Activated T-helper 2 cell treated with anti-CD3 and anti-CD28 coated beads, Interferon-gamma antibody, Interleukin-2, Interleukin-4, amounts not matched to agents 10 μg/mL and 5 μg/mL and 100 μg/mL, durations not matched to agents 14 hours and 24 hours and 36 hours (primary cell): ENCODE measurements at regions of chr11 and their contacts with region 1.

Region 1: GRCh38 chr11:62855571-62856332 is 16.4 kb upstream of the WDR74 start:
- DNase-seq: peak; percentile 98
- H3K4me3 Mint-ChIP-seq: peak overlapping the region; percentile 96
- H3K27ac Mint-ChIP-seq: peak overlapping the region; percentile 96
- H3K4me1 Mint-ChIP-seq: peaks cover 45% of the 10 kb centered on the region
- H3K27me3 Mint-ChIP-seq: no peaks in the 10 kb centered on the region

Region 2: DNA sequence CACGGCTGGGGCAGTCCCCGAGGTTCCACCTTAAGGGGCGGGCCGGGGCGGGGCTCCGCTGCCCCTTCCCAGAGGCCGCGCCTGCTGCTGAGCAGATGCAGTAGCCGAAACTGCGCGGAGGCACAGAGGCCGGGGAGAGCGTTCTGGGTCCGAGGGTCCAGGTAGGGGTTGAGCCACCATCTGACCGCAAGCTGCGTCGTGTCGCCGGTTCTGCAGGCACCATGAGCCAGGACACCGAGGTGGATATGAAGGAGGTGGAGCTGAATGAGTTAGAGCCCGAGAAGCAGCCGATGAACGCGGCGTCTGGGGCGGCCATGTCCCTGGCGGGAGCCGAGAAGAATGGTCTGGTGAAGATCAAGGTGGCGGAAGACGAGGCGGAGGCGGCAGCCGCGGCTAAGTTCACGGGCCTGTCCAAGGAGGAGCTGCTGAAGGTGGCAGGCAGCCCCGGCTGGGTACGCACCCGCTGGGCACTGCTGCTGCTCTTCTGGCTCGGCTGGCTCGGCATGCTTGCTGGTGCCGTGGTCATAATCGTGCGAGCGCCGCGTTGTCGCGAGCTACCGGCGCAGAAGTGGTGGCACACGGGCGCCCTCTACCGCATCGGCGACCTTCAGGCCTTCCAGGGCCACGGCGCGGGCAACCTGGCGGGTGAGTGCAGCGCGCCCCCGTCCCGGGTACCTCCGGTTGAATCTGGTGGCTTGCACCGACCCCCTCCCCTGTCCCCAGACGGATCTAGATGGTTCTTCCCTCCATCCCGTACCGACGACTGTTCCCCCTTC is 25.2 kb after region 1 on chr11 and contains the start of gene SLC3A2:
- intact Hi-C with region 1: loop called (anchors 1 kb)
- DNase-seq: peak; percentile 85
- H3K4me3 Mint-ChIP-seq: peak within 1 kb of the TSS; percentile 100
- H3K27ac Mint-ChIP-seq: peak within 1 kb of the TSS; percentile 100
- H3K4me1 Mint-ChIP-seq: peaks cover 55% of the 10 kb centered on the region
- H3K27me3 Mint-ChIP-seq: no peaks in the 10 kb centered on the region
- total RNA-seq, gene SLC3A2: 245 and 286 TPM in 2 replicates

Region 3: GRCh38 chr11:62958547-62959421 is 103.0 kb after region 1 on chr11:
- intact Hi-C with region 1: no loop called
- DNase-seq: no peak
- H3K4me3 Mint-ChIP-seq: no peak overlapping the region
- H3K27ac Mint-ChIP-seq: no peak overlapping the region
- H3K4me1 Mint-ChIP-seq: no peaks in the 10 kb centered on the region
- H3K27me3 Mint-ChIP-seq: peaks cover 5% of the 10 kb centered on the region